GM12878 (cell line): ENCODE measurements at regions of chr19 and their contacts with region 1.

Region 1: DNA sequence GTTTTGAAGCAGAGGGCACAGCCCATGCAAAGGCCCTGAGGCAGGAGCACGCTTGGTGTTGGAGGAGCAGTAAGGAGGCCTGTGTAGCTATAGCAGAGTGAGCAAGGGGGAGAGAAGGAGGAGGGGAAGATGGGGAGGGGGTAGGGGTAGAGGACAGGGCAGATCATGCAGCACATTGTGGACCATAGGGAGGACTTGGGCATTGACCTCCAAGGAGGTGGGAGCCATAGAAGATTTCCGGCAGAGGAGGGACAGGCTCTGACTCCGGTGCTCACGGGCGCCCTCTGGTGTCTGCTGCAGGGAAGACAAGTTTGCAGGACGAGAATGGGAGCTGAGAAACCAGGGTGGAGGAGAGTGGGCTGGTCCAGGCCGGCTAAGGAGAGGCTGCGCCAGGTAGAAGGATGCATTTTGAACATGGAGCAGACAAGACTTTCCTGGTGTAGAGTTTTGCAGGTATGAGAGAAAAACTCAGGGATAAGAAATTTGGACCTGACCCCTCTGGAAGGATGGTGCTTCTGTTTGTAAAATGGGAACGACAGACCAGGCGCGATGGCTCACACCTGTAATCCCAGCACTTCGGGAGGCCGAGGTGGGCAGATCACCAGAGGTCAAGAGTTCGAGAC is 13.7 kb upstream of the CREB3L3 start:
- DNase-seq: peak; percentile 48
- ATAC-seq: peak; percentile 98
- H3K4me3 ChIP-seq: no peak overlapping the region
- H3K27ac ChIP-seq: no peak overlapping the region
- H3K4me1 ChIP-seq: peaks cover 4% of the 10 kb centered on the region; the same call in 1 of the 2 replicates
- H3K27me3 ChIP-seq: no peaks in the 10 kb centered on the region
- CTCF ChIP-seq: peak; percentile 85 to 97 (median 95)
- EP300 ChIP-seq: no peak
- POLR2A ChIP-seq: no peak
- RAD21 ChIP-seq: peak; percentile 61

Region 2: DNA sequence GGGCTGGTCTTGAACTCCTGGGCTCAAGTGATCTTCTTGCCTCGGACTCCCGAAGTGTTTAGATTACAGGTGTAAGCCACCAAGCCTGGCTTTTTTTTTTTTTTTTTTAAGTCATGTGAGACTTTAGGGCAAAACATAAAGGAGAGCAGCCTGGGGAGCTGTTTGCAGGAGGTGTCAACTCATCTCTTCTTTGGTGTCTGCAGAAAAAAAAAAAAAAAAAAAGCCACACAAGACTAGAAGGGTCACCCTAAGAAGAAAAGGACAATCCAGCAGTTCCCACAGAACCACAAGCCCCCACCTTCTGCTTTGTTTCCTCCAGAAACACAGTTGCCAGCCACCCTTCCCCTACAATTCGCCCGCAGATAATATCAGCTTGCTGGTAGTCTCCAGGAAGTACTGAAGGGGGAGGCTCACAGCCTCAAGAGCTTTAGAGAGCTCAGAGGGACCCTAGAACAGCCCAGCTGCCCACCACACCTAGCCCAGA is 50.8 kb before region 1 on chr19:
- CTCF ChIA-PET with region 1: no interaction called
- POLR2A ChIA-PET with region 1: no interaction called
- RAD21 ChIA-PET with region 1: no interaction called
- SMC1A ChIA-PET with region 1: no interaction called
- in situ Hi-C with region 1: no loop called
- intact Hi-C with region 1: no loop called
- DNase-seq: no peak
- ATAC-seq: no peak
- H3K4me3 ChIP-seq: no peak overlapping the region
- H3K27ac ChIP-seq: peak overlapping the region; percentile 27
- H3K4me1 ChIP-seq: peaks cover 15% of the 10 kb centered on the region
- H3K27me3 ChIP-seq: no peaks in the 10 kb centered on the region
- CTCF ChIP-seq: no peak
- EP300 ChIP-seq: no peak
- POLR2A ChIP-seq: no peak
- RAD21 ChIP-seq: no peak

Region 3: GRCh38 chr19:4115050-4115817 is 24.5 kb before region 1 on chr19:
- CTCF ChIA-PET with region 1: interaction called, 25 read pairs
- POLR2A ChIA-PET with region 1: no interaction called
- RAD21 ChIA-PET with region 1: interaction called, 9 read pairs
- SMC1A ChIA-PET with region 1: interaction called, 9 read pairs
- in situ Hi-C with region 1: no loop called
- intact Hi-C with region 1: no loop called
- DNase-seq: peak; percentile 67
- ATAC-seq: peak; percentile 96
- H3K4me3 ChIP-seq: peak overlapping the region; percentile 50
- H3K27ac ChIP-seq: peak overlapping the region; percentile 55
- H3K4me1 ChIP-seq: peaks cover 28% of the 10 kb centered on the region
- H3K27me3 ChIP-seq: no peaks in the 10 kb centered on the region
- CTCF ChIP-seq: peak in 2 of 3 experiments; percentile 2 to 33; a peak in 3 of 6 replicates
- EP300 ChIP-seq: 0 out of 4 replicates have a peak, but pooled peaks of 1 of the 2 experiments have one; percentile 51
- POLR2A ChIP-seq: no peak; the same call in 1 of the 2 replicates
- RAD21 ChIP-seq: 0 out of 2 replicates have a peak, but pooled peaks have one; percentile 2

Region 4: DNA sequence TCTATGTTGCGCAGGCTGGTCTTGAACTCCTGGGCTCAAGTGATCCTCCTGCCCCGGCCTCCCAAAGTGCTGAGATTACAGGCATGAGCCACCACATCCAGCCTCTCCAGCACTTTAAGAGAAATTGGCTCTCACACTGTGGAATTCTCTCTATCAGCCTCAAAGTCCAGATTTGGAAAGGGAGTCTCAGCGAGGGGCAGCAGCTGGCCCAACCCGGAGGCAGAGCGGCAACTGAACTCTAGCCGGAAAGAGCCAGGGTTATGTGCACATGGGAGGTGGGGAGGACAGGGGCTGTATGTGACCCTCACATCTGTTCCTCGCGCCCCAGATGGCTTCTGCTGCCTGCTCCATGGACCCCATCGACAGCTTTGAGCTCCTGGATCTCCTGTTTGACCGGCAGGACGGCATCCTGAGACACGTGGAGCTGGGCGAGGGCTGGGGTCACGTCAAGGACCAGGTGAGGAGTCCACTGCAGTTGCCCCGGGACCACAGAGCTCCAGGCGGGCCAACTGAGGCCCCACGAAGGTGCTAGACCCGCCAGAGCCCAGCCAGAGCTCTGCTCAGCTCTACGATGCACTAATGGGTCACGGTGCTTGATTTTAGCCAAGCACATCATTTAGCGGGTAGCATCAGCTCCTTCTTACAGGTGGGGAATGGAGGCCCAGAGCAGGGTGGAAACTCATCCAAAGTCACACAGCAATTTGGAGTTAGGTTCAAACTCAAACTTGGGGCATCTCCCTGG is 15.0 kb after region 1 on chr19:
- CTCF ChIA-PET with region 1: interaction called, 24 read pairs
- POLR2A ChIA-PET with region 1: interaction called, 5 read pairs
- RAD21 ChIA-PET with region 1: interaction called, 4 read pairs
- SMC1A ChIA-PET with region 1: interaction called, 3 read pairs
- in situ Hi-C with region 1: no loop called
- intact Hi-C with region 1: no loop called
- DNase-seq: no peak
- ATAC-seq: no peak
- H3K4me3 ChIP-seq: no peak overlapping the region
- H3K27ac ChIP-seq: no peak overlapping the region
- H3K4me1 ChIP-seq: 0 out of 2 replicates have a peak, but pooled peaks cover 2% of the 10 kb centered on the region
- H3K27me3 ChIP-seq: peaks cover 0 to 1% of the 10 kb centered on the region in 2 experiments; a peak in 1 of 4 replicates
- CTCF ChIP-seq: no peak
- EP300 ChIP-seq: no peak
- POLR2A ChIP-seq: no peak
- RAD21 ChIP-seq: no peak

Region 5: DNA sequence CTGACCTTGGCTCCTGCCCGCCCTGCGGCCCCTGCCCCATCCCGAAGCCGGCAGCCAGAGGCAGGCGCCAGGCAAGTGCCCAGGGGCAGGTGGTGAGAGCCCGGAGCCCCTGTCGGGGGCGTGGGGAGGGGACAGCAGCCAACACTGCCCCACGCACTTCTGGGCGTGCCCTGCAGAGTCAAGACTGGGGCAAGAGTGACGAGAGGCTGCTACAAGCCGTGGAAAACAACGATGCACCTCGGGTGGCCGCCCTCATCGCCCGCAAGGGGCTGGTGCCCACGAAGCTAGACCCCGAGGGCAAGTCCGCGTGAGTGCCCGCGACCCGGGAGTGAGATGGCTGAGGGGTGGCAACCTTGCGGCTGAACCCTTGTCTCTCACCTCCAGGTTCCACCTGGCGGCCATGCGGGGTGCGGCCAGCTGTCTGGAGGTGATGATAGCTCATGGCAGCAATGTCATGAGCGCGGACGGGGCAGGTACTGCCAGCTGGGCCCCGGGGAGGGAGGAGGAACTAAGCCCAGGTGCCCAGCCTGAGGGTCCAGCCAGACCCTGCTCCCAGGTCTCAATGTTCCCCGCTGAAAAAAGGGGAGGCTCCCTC is 60.1 kb after region 1 on chr19:
- CTCF ChIA-PET with region 1: interaction called, 63 read pairs
- POLR2A ChIA-PET with region 1: interaction called, 3 read pairs
- RAD21 ChIA-PET with region 1: interaction called, 3 read pairs
- SMC1A ChIA-PET with region 1: interaction called, 8 read pairs
- in situ Hi-C with region 1: no loop called
- intact Hi-C with region 1: no loop called
- DNase-seq: no peak
- ATAC-seq: no peak
- H3K4me3 ChIP-seq: no peak overlapping the region
- H3K27ac ChIP-seq: no peak overlapping the region
- H3K4me1 ChIP-seq: no peaks in the 10 kb centered on the region
- H3K27me3 ChIP-seq: no peaks in the 10 kb centered on the region; a peak in 1 of 4 replicates
- CTCF ChIP-seq: 0 out of 6 replicates have a peak, but pooled peaks of 1 of the 3 experiments have one; percentile 7
- EP300 ChIP-seq: no peak
- POLR2A ChIP-seq: no peak
- RAD21 ChIP-seq: no peak